Sigmoid colon (tissue), 7 donors: ENCODE measurements at regions of chr21 and their contacts with region 1.

Region 1: GRCh38 chr21:39137248-39138178 is 45.7 kb downstream of the PSMG1 start:
- DNase-seq: no peak
- H3K4me3 ChIP-seq: no peak overlapping the region
- H3K27ac ChIP-seq: no peak overlapping the region
- H3K4me1 ChIP-seq: no peaks in the 10 kb centered on the region
- H3K27me3 ChIP-seq: no peaks in the 10 kb centered on the region
- CTCF ChIP-seq: no peak
- EP300 ChIP-seq: no peak
- POLR2A ChIP-seq: no peak

Region 2: DNA sequence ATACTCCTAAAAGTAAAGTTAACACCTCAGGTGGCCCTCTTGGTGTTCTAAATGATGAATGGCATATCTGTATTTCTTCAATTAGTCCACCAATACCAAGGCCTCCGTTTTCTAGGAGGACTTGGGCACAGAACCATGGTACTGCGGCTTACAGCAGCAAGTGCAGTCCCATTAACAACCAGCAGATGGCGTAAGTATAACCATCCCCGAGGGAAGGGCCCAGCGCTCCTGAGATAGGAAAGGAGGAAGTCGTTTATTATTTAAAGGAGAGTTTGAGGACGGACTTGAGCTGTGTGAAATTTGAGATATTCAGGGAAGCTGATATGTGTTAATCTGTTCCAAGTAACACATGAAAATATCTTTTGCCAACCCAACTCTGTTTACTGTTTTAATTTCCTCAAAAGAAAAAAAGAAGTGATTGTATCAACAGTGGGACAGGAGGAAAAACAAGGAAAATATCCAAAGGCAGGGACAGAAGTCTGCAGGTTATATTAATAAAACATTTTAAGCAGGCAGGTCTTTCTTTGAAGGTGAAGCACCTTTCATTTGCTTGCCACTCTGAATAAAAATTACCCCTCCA is 918.4 kb before region 1 on chr21:
- intact Hi-C with region 1: loop called (anchors 5 kb)
- DNase-seq: peak; percentile 84
- H3K4me3 ChIP-seq: no peak overlapping the region
- H3K27ac ChIP-seq: no peak overlapping the region
- H3K4me1 ChIP-seq: no peaks in the 10 kb centered on the region
- H3K27me3 ChIP-seq: no peaks in the 10 kb centered on the region
- CTCF ChIP-seq: peak; percentile 66 to 87 (median 74)
- EP300 ChIP-seq: no peak
- POLR2A ChIP-seq: no peak

Region 3: DNA sequence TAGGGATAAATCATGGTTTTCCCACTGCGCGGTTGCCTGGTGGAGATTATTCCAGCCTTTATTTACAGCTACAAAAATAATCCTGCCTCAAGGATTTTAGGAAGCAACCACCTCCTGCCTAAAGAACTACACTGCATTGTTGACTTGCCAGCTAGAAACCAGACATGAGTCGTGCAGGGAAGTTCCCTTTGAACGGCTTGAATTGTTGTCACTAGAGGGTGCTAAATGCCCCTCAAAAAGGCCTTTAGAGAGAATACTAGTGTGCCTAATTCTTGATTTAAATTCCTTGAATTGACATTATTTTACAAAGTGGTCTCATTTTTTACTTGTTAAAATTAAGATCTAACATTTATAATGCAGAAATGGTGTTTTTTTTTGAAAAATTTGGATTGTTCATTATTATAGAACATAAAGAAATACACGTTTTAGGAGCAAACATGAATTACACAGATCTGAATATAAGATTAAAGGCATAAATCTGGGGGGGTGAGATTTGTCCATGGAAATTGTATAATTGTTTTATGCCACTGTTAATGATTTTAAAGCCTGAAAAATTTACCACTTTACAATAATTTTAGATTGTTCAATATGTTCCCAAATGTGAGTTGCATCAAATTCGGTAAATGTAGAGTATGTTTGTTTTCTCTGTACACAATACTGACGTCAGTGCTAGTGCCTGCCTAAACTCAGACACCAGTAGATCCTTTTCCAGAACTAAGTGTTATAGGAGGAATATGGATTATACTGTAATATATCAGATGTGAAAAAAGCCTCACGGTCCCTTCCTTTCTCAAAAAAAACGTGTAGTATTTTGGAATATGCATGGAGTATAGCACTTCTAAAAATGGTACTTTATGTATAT is 631.6 kb before region 1 on chr21:
- intact Hi-C with region 1: loop called (anchors 2 kb)
- DNase-seq: no peak
- H3K4me3 ChIP-seq: peak overlapping the region in 1 of 4 donors; percentile 12
- H3K27ac ChIP-seq: peak overlapping the region in 2 of 4 donors; percentile 4 to 65
- H3K4me1 ChIP-seq: peaks cover 0 to 4% (median 0%) of the 10 kb centered on the region in 4 donors
- H3K27me3 ChIP-seq: no peaks in the 10 kb centered on the region
- CTCF ChIP-seq: peak in 3 of 4 experiments; percentile 18 to 58 (median 35)
- EP300 ChIP-seq: no peak
- POLR2A ChIP-seq: no peak

Region 4: DNA sequence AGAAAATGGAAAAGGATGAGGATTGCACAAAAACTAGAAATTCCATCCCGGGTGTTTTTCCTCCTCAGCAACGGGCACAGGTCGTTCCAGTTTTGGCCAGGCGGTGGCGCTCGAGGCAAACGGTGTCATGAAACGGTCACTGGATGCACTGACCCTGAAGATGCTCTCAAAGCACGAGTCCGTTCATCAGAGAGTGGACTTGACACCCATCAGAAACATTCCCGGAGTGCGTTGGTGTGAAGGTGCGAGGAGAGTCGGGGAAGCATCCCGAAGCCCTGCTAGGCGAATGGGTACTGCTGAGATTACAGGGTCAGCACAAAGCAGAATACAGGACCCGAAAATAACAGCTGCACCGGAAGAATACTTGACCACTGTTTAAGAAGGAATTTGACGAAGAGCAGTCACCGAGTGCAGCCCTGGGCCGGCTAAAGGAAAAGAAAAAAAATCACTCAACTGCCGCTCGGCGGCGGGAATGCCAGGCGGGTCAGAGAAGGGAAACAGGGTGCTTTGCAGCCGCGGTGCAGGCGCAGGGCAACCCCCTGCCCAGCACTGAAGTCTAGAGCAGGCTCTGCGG is 403.5 kb before region 1 on chr21:
- intact Hi-C with region 1: loop called (anchors 1 kb)
- DNase-seq: peak; percentile 92
- H3K4me3 ChIP-seq: peak overlapping the region in 3 of 4 donors; percentile 11 to 40 (median 38)
- H3K27ac ChIP-seq: peak overlapping the region; percentile 55 to 76 (median 75)
- H3K4me1 ChIP-seq: peaks cover 0 to 9% (median 6%) of the 10 kb centered on the region in 4 donors
- H3K27me3 ChIP-seq: no peaks in the 10 kb centered on the region
- CTCF ChIP-seq: peak; percentile 84 to 93 (median 90)
- EP300 ChIP-seq: no peak
- POLR2A ChIP-seq: no peak

Region 5: DNA sequence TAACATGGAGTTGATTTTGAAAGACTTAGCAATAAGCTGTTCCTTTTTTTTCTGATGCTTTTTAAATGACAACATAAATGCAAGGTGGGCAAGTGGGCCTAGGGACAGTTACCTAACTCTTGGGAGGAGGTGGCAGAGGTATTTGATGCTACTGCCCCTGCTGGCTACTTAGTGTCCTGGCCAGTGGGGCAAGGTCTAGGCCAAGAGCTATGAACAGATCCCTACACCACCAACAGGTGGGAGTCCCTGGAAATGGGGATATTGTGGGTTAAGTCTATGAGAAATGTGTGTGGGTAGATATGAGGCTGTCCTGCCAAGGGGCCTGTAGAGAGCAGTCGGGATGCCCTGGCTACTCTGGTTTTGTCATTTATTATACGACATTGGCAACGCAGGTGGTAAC is 443.9 kb after region 1 on chr21:
- intact Hi-C with region 1: no loop called
- DNase-seq: no peak
- H3K4me3 ChIP-seq: no peak overlapping the region
- H3K27ac ChIP-seq: no peak overlapping the region
- H3K4me1 ChIP-seq: no peaks in the 10 kb centered on the region
- H3K27me3 ChIP-seq: no peaks in the 10 kb centered on the region
- CTCF ChIP-seq: no peak
- EP300 ChIP-seq: no peak
- POLR2A ChIP-seq: no peak